Activated CD4-positive, alpha-beta memory T cell treated with anti-CD3 and anti-CD28 coated beads for 36 hours (primary cell): ENCODE measurements at regions of chr16 and their contacts with region 1.

Region 1: DNA sequence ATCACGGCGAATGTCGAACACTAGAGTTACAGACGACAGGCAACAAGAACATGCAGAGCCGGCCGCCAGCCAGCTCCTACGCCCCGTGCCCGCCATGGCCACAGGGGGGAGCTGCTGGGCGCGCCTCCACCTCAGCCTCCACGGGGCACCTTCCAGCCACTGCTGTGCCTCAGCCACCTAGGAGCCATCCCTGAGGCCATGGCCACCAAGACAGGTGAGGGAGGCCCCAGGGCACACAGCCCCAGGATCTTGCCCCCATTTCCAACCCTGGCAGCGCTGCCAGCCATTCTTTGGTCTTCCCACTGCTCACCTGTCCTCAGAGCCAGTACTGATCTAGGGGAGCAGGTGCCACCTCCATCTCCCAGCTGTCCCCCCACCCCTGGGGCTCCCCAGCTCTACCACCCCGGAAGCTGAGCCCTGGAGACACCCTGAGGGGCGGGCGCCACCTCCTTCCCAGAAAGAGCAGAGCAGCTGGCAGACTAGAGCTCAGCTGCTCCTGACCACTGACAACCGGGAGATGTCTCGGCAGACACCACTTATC is 11.8 kb downstream of the GNPTG start:
- DNase-seq: peak; percentile 81
- H3K4me3 Mint-ChIP-seq: no peak overlapping the region
- H3K27ac Mint-ChIP-seq: peak overlapping the region; percentile 60
- H3K4me1 Mint-ChIP-seq: peaks cover 6% of the 10 kb centered on the region
- H3K27me3 Mint-ChIP-seq: no peaks in the 10 kb centered on the region

Region 2: GRCh38 chr16:1323296-1324195 is 40.0 kb before region 1 on chr16:
- CTCF ChIA-PET with region 1: no interaction called
- POLR2A ChIA-PET with region 1: no interaction called
- intact Hi-C with region 1: no loop called
- DNase-seq: no peak
- H3K4me3 Mint-ChIP-seq: no peak overlapping the region
- H3K27ac Mint-ChIP-seq: no peak overlapping the region
- H3K4me1 Mint-ChIP-seq: no peaks in the 10 kb centered on the region
- H3K27me3 Mint-ChIP-seq: no peaks in the 10 kb centered on the region

Region 3: GRCh38 chr16:1378804-1379303 is 15.3 kb after region 1 on chr16:
- CTCF ChIA-PET with region 1: interaction called, 49 read pairs
- POLR2A ChIA-PET with region 1: interaction called, 5 read pairs
- intact Hi-C with region 1: no loop called
- DNase-seq: peak; percentile 85
- H3K4me3 Mint-ChIP-seq: peak overlapping the region; percentile 87
- H3K27ac Mint-ChIP-seq: peak overlapping the region; percentile 90
- H3K4me1 Mint-ChIP-seq: peaks cover 20% of the 10 kb centered on the region
- H3K27me3 Mint-ChIP-seq: no peaks in the 10 kb centered on the region

Region 4: DNA sequence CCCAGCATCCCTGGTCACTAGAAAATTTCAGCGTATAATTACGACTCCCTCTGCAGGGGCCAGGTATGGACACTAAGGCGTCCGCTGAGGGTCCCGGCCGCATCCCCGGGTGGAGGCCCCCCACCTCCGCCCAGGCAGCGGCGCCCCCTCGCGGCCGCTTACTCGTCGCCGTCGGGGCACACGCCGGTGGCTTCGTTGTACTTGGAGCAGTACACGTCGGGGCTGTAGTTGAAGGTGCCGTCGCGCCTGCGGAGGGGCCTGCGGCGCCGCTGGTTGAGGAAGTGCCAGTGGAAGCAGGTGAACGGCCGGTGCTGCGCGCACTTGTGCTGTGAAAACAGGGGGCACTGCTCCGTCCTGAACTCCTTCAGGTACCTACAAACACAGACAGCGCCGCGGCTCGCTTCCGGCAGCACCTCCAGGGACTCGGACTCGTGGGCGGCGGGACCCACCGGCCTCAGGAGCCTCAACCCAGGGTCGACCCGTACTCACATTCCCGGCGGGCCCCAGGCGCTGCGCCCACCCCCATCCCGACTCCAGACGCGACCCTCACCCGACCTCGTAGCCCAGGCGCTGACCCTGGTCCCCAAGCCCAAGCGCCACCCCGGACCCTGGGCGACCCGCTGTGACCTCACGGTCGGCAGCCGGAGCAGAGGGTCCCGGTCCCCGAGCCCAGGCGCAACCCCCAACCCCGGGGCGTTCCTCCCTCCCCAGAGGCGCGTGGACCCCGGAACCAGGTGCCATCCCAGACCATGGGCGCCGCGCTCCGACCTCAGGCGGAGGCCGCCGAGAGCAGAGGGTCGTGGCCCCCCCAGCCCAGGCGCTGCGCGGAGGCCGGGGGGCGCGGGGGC is 50.3 kb after region 1 on chr16:
- CTCF ChIA-PET with region 1: no interaction called
- POLR2A ChIA-PET with region 1: no interaction called
- intact Hi-C with region 1: loop called (anchors 5 kb)
- DNase-seq: peak; percentile 82
- H3K4me3 Mint-ChIP-seq: peak overlapping the region; percentile 83
- H3K27ac Mint-ChIP-seq: peak overlapping the region; percentile 80
- H3K4me1 Mint-ChIP-seq: peaks cover 26% of the 10 kb centered on the region
- H3K27me3 Mint-ChIP-seq: no peaks in the 10 kb centered on the region

Region 5: DNA sequence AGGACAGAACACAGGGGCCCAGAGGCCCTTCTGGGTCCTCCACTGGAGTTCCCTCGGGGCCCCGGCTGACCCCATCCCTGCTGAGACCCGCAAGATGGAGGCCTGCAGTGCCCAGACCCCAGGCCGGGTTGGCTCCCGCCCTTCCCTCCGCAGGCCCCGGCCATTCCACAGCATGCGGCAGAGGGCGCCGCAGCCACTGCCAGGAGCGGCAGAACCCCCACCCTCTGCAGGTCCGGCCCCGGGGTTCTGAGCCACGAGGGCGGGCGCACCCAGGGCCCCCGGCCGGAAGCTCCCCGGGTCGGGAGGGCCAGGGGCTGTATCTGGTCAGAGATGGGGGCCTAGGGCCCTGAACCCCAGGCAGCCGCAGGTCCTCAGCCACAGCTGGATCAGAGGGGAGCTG is 64.9 kb after region 1 on chr16:
- CTCF ChIA-PET with region 1: no interaction called
- POLR2A ChIA-PET with region 1: no interaction called
- intact Hi-C with region 1: no loop called
- DNase-seq: peak; percentile 63
- H3K4me3 Mint-ChIP-seq: no peak overlapping the region
- H3K27ac Mint-ChIP-seq: no peak overlapping the region
- H3K4me1 Mint-ChIP-seq: no peaks in the 10 kb centered on the region
- H3K27me3 Mint-ChIP-seq: no peaks in the 10 kb centered on the region